ENCODE measurements at regions of chr2 and their contacts with region 1.

Region 1: GRCh38 chr2:13901526-13901925 is 731.0 kb upstream of the LRATD1 start:
- DNase-seq: no peak
- H3K4me3 ChIP-seq: no peak overlapping the region
- H3K27ac ChIP-seq: no peak overlapping the region
- H3K4me1 ChIP-seq: no peaks in the 10 kb centered on the region
- H3K27me3 ChIP-seq: no peaks in the 10 kb centered on the region
- CTCF ChIP-seq: no peak
- POLR2A ChIP-seq: no peak

Region 2: DNA sequence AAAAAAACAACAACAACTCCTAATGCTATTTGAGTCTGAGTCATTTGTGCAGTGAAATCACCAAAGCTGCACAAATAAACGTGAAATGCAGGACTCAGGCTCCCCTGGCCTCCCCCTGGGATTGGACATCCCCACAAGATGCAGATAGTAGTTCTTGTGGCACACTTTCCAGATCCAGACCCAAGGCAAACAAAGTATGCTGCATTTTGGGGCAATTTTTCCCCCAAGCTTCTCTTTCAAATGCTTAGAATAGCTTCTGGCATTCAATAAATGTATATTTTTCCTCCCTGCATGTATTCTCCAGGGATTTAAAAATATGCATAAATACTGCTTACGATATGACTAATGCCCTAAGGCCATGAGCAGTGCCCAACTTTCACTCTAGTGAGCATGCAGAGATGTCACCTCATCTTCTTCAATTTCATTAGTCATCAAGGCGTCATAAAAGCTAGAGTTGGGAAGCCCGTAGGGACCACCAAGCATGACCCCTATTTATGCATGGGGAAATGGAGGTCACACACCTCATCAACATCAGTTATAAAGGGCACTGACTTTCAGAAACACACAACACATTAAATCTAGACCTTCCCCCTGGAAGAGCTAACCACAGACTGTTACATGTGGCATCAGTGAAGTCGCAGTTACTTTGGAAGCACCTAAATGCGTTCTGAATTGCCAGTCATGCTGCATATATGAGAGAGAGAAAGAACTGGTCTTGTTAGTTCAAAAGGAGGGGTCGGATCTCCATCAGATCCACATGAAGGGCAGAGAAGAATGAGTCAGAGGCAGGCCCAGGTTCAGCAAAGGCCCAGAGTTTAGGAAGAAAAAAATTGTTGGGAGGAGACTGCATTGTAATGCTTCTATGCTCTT is 1781.0 kb before region 1 on chr2:
- intact Hi-C with region 1: no loop called
- DNase-seq: no peak
- H3K4me3 ChIP-seq: no peak overlapping the region
- H3K27ac ChIP-seq: no peak overlapping the region
- H3K4me1 ChIP-seq: no peaks in the 10 kb centered on the region
- H3K27me3 ChIP-seq: no peaks in the 10 kb centered on the region
- CTCF ChIP-seq: no peak
- POLR2A ChIP-seq: no peak

Region 3: GRCh38 chr2:13758412-13758811 is 143.1 kb before region 1 on chr2:
- intact Hi-C with region 1: no loop called
- DNase-seq: no peak
- H3K4me3 ChIP-seq: no peak overlapping the region
- H3K27ac ChIP-seq: no peak overlapping the region
- H3K4me1 ChIP-seq: no peaks in the 10 kb centered on the region
- H3K27me3 ChIP-seq: no peaks in the 10 kb centered on the region
- CTCF ChIP-seq: no peak
- POLR2A ChIP-seq: no peak

Region 4: DNA sequence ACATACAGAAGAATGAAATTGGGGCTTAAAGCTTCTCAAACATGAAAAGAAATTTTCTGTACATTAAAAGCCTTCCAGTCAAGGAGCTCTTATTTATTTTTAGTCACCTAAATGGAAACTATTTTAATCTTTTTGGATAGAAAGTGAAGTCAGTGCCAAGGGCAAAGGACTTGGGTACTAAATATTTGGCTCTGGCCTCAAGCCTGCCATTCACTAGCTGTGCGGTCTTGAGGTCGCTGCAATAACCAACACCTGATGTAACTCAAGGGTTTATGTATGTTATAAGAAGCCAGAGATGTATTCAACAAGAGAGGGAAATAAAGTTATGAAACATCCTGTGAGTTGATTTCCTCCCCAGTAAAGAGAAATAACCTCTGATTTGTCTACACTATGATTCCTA is 681.5 kb after region 1 on chr2:
- intact Hi-C with region 1: loop called (anchors 5 kb)
- DNase-seq: no peak
- H3K4me3 ChIP-seq: no peak overlapping the region
- H3K27ac ChIP-seq: no peak overlapping the region
- H3K4me1 ChIP-seq: no peaks in the 10 kb centered on the region
- H3K27me3 ChIP-seq: no peaks in the 10 kb centered on the region
- CTCF ChIP-seq: no peak
- POLR2A ChIP-seq: no peak

Measured in vagina (tissue), 2 donors.